ENCODE measurements at regions of chr2 and their contacts with region 1.

Region 1: GRCh38 chr2:74876081-74876886 is 42.4 kb downstream of the HK2 start:
- DNase-seq: peak; percentile 35 to 48
- H3K4me3 ChIP-seq: no peak overlapping the region
- H3K27ac ChIP-seq: peak overlapping the region; percentile 39; the same call in 1 of the 2 replicates
- H3K4me1 ChIP-seq: no peaks in the 10 kb centered on the region
- H3K27me3 ChIP-seq: no peaks in the 10 kb centered on the region
- CTCF ChIP-seq: peak; percentile 89

Region 2: GRCh38 chr2:74671479-74671878 is 204.8 kb before region 1 on chr2:
- CTCF ChIA-PET with region 1: no interaction called
- POLR2A ChIA-PET with region 1: no interaction called
- intact Hi-C with region 1: no loop called
- DNase-seq: no peak
- H3K4me3 ChIP-seq: no peak overlapping the region
- H3K27ac ChIP-seq: no peak overlapping the region
- H3K4me1 ChIP-seq: no peaks in the 10 kb centered on the region
- H3K27me3 ChIP-seq: no peaks in the 10 kb centered on the region
- CTCF ChIP-seq: no peak

Region 3: GRCh38 chr2:74685408-74685807 is 190.9 kb before region 1 on chr2:
- CTCF ChIA-PET with region 1: no interaction called
- POLR2A ChIA-PET with region 1: interaction called, 16 read pairs
- intact Hi-C with region 1: loop called (anchors 1 kb)
- DNase-seq: no peak
- H3K4me3 ChIP-seq: no peak overlapping the region
- H3K27ac ChIP-seq: no peak overlapping the region
- H3K4me1 ChIP-seq: 0 out of 2 replicates have a peak, but pooled peaks cover 8% of the 10 kb centered on the region
- H3K27me3 ChIP-seq: no peaks in the 10 kb centered on the region
- CTCF ChIP-seq: no peak

Region 4: DNA sequence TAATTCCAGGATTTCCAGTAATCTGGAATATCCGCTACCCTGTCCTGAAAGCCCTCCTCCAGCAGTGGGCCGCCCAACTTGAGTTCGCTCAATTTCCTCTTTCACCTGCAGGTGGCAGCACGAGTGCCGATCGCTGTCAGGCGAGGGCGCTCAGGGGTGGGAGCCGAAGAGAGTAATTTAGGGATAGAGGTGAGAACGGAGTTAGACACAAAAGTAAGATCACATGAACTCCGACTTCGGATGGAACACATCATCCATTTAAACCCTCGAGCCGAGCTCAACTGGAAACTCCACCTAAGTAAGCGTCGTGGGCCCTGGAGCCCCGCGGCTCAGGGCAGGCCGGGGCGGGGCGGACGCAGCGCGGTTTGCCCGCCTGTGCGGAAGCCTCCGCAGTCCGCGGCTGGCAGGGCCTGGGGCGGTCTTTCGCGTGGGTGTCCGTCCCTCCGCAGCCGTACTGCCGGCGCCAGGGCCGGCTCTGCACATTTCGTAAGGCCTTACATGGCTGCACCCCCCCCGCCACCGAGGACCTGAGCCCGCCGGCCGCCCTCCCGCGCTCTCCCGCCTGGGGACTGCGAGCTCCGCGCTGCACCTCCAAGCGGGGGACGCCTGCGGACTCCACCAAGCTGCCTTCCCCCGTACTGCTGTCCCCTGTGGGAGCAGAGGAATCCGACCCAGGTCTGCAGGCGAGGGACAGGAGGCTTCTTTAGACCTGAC is 161.0 kb before region 1 on chr2:
- CTCF ChIA-PET with region 1: interaction called, 5 read pairs
- POLR2A ChIA-PET with region 1: no interaction called
- intact Hi-C with region 1: loop called (anchors 1 kb)
- DNase-seq: peak; percentile 77 to 80
- H3K4me3 ChIP-seq: peak overlapping the region; percentile 72
- H3K27ac ChIP-seq: peak overlapping the region; percentile 43
- H3K4me1 ChIP-seq: peaks cover 50% of the 10 kb centered on the region
- H3K27me3 ChIP-seq: no peaks in the 10 kb centered on the region
- CTCF ChIP-seq: peak; percentile 97